GM13977 (cell line): ENCODE measurements at regions of chr7 and their contacts with region 1.

Region 1: DNA sequence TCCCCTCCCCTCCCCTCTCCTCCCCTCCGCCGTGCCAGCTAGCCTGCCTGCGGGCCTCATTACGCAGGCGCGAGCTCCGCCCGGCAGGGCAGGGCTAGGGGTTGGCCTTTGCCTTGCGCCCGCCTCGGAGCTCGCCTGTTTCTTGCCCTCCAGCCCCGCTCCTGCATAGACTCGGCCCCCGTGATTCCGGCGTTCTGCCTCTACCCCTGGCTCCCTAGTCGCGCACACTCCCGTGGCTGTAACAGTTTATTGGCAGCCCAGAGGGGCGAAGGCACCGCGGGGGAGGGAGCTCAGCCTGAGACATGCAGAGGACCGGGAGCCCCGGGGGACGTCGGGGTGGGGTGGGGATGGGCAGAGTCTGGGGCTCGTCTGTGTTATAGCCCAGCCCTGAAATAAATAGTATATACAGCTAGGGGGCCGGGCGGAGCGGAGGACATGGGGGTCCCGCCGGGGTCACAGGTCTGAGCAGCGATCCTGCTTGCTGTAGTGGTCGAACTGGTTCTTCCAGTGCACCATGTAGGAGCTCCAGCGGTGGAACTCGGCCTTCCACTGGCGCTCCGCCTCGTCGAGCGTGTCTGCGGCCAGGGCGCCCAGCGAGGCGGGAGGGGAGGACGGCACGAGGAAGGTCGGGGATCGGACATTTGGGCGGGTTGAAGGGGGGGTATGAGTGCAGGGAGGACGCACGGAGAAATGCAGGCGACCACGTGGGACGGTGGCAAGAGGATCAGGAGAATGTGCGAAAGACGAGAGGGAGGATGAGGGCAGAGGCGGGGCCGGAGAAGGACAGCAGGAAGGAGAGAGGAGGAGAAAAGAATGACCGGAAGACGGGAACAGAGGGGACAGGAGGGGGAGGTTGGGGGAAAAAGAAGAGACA is 483 bp upstream of the UFSP1 start:
- DNase-seq: peak; percentile 100
- CTCF ChIP-seq: no peak

Region 2: DNA sequence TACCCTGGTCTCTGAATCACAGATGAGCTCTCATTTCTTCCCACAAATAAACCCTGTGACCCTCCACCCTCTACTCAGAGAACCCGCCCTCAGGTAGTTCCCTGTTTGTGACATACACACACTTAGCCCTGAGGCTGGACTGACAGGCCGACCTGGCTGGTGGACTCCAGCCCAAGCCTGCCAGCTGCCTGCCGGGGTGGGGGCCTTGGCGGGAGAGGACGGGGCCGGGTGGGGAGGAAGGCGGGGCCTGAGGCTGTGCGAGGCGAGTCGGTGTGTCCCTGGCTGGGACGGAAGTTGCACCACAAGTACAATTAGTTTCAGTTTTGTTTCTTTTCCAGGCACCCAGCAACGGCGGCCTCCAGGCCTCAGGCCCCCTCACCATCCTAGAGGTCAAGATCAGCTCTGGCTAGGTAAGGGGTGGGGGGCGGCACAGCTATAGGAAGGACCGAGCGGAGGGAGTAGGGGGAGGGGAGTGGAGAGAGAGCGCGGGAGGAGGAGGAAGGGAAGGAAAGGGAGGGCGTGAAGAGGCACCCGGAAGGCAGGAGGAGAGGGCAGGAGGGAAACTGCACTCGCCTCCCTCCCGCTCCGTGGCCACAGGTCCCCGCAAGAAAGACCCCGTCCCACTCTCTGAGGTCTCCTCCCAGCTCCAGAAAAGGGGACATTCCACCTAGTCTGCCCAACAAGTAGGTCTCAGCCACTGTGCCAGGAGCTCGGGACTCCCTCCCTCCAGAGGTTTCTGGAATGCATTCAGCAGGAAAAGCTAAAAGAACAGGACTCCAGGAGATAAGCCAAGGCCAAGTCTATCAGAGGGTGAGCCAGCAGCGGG is 195.4 kb after region 1 on chr7 and contains the start of gene TRIM56:
- in situ Hi-C with region 1: loop called (anchors 10 kb)
- DNase-seq: peak; percentile 95
- CTCF ChIP-seq: no peak